ENCODE measurements at regions of chrX and their contacts with region 1.

Region 1: DNA sequence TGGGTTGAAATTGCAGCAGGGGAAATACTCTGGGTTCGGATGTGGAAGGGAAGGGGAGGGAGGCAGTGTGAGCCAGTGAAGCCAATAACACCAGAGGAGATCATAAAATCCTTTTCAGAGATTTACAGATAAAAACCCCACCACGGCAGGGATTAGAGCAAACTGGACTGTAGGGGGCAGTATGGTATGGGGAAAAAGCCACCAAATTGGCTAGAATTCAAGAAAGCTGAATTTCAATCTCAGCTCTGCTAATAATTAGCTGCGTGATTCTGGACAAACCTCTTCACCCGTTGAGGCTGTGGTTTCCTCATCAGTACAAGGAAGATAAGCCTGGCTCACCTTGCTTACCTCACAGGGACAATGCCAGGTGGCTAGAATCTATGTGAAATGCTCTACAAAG is 108.1 kb downstream of the ATG4A start:
- DNase-seq: peak; percentile 27
- ATAC-seq: no peak
- H3K4me3 Mint-ChIP-seq: no peak overlapping the region
- H3K27ac Mint-ChIP-seq: no peak overlapping the region
- H3K4me1 Mint-ChIP-seq: no peaks in the 10 kb centered on the region
- H3K27me3 Mint-ChIP-seq: peaks cover under 1% of the 10 kb centered on the region

Region 2: DNA sequence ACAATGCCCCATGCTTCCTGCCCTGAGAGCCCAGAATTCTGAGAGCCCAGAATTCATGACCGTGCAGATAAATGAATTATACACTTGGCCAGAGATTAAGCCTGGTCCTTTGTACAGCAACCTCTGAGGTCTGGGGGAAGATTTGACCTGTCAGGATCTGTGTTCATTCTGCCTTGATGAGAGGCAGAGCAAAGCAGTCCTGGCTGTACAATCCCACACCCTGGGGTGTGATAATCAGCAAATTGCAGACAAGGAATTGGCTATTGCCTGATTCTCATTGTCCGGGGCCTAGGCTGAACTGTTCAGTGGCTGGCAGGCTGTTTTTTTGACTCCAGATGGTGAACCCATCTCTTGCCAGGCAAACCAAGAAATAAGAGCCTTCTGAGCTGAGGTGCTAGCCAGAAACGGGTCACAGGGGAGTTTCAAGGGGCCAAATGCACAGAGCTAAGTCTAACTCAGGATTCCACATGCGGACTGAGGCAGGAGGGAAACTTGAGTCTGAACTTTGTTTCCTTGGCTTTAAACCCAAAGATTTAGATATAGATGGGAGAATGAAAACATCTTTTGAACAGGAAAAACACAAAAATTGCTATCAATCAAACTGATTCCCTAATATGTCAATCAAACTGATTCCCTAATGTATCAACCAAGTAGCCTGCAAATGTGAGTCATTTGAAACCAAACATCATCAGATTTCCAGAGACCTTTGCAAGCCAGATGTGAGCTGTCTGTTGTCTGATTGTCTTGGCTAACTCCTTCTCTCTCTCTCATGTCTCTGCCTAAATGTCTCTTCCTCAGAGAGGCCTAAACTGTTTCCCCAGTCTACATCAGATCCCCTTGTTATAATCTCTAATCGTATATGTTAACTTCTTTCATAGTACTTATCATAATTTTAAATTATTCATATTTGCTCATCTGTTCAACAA is 51.2 kb after region 1 on chrX:
- CTCF ChIA-PET with region 1: no interaction called
- POLR2A ChIA-PET with region 1: no interaction called
- intact Hi-C with region 1: loop called in 1 of 2 experiments (anchors 10 kb)
- DNase-seq: no peak
- ATAC-seq: no peak
- H3K4me3 Mint-ChIP-seq: no peak overlapping the region
- H3K27ac Mint-ChIP-seq: no peak overlapping the region
- H3K4me1 Mint-ChIP-seq: no peaks in the 10 kb centered on the region
- H3K27me3 Mint-ChIP-seq: peaks cover 8% of the 10 kb centered on the region

Region 3: DNA sequence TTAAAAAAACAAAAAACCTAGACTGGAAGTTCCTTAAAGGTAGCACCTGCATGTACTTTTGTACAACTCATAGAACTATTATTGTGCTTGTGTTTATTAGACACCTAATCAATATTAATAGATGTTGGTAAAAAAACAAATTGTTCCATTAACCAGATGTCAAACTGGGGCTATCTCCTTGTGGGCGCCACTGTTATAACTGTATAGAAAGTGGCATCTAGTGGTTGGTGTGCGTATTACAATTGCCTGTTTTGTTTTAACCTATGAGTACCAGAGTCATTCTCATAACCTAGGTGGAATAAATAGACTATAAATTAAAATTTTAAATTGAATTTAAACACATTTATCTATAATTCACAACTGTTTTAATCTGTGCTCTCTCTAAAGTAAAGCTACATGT is 337.3 kb after region 1 on chrX:
- CTCF ChIA-PET with region 1: no interaction called
- POLR2A ChIA-PET with region 1: no interaction called
- intact Hi-C with region 1: loop called in 1 of 2 experiments (anchors 10 kb)
- DNase-seq: no peak
- ATAC-seq: no peak
- H3K4me3 Mint-ChIP-seq: no peak overlapping the region
- H3K27ac Mint-ChIP-seq: no peak overlapping the region
- H3K4me1 Mint-ChIP-seq: no peaks in the 10 kb centered on the region
- H3K27me3 Mint-ChIP-seq: no peaks in the 10 kb centered on the region

Region 4: GRCh38 chrX:108892516-108892915 is 692.8 kb after region 1 on chrX:
- CTCF ChIA-PET with region 1: no interaction called
- POLR2A ChIA-PET with region 1: no interaction called
- intact Hi-C with region 1: no loop called
- DNase-seq: no peak
- ATAC-seq: no peak
- H3K4me3 Mint-ChIP-seq: no peak overlapping the region
- H3K27ac Mint-ChIP-seq: no peak overlapping the region
- H3K4me1 Mint-ChIP-seq: no peaks in the 10 kb centered on the region
- H3K27me3 Mint-ChIP-seq: no peaks in the 10 kb centered on the region

Measured in activated CD4-positive, alpha-beta T cell treated with anti-CD3 and anti-CD28 coated beads for 36 hours (primary cell).